Uterus (tissue), 4 donors: ENCODE measurements at regions of chr1 and their contacts with region 1.

Region 1: GRCh38 chr1:226121587-226122400 is 59.3 kb downstream of the H3-3A start:
- DNase-seq: peak; percentile 48 to 66
- H3K4me3 ChIP-seq: peak overlapping the region; percentile 21 to 67
- H3K27ac ChIP-seq: peak overlapping the region; percentile 52 to 84
- H3K4me1 ChIP-seq: no peaks in the 10 kb centered on the region
- H3K27me3 ChIP-seq: no peaks in the 10 kb centered on the region
- CTCF ChIP-seq: peak; percentile 40 to 97 (median 96)
- POLR2A ChIP-seq: peak in 1 of 2 donors; percentile 41

Region 2: GRCh38 chr1:226201029-226201593 is 79.3 kb after region 1 on chr1:
- intact Hi-C with region 1: loop called (anchors 2 kb)
- DNase-seq: no peak
- H3K4me3 ChIP-seq: no peak overlapping the region
- H3K27ac ChIP-seq: no peak overlapping the region
- H3K4me1 ChIP-seq: no peaks in the 10 kb centered on the region
- H3K27me3 ChIP-seq: peaks cover 0 to 4% of the 10 kb centered on the region in 2 donors
- CTCF ChIP-seq: no peak
- POLR2A ChIP-seq: no peak